ENCODE measurements at regions of chr3 and their contacts with region 1.

Region 1: DNA sequence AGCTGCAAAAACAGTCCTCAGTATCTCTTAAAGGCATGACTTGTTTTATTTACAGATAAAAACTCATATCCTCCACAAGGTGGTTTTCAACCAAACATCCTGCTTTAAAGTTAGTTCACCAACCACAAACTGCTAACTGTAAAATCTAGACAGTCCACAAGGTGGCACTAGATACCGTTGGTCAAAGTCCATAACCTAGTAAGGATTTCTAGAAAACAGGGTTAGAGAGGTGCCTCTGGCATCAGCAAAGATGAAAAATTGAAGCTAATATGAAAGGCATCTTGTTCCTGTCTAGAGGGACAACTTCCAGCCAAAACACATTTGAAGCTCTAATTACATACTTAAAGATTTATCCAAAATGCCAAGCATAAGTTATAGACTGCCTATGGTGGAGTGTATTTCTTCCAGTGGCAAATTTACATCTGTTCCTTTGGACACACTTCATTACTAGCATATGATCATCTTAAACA is 56.0 kb downstream of the ZMAT3 start:
- DNase-seq: peak; percentile 26 to 87 (median 59)
- ATAC-seq: peak; percentile 98
- H3K4me3 ChIP-seq: no peak overlapping the region
- H3K4me3 Mint-ChIP-seq: no peak overlapping the region
- H3K27ac ChIP-seq: no peak overlapping the region
- H3K27ac Mint-ChIP-seq: no peak overlapping the region
- H3K4me1 ChIP-seq: peaks cover 3% of the 10 kb centered on the region
- H3K4me1 Mint-ChIP-seq: peaks cover 18% of the 10 kb centered on the region
- H3K27me3 ChIP-seq: no peaks in the 10 kb centered on the region
- H3K27me3 Mint-ChIP-seq: no peaks in the 10 kb centered on the region
- CTCF ChIP-seq: peak; percentile 84

Region 2: DNA sequence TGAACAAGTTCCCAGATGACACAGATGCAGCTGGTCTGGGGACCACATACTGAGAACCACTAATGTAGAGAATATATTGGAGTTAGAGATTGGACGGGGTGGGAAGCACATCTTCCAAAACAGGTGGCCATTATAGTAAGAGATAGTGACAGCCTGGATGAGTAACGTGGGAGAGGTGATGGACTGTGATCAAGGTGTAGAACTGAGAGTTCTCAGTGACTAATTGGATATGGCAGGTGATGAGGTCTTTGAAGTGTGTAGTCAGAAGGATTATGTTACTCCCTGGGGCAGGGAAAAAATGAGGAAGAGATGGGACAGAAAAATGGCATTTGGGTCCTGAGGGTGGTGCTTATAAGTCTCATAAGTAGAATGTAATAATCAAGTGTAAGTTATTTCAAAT is 412.7 kb before region 1 on chr3:
- CTCF ChIA-PET with region 1: no interaction called
- POLR2A ChIA-PET with region 1: no interaction called
- intact Hi-C with region 1: no loop called
- DNase-seq: no peak
- ATAC-seq: no peak
- H3K4me3 ChIP-seq: no peak overlapping the region
- H3K4me3 Mint-ChIP-seq: no peak overlapping the region
- H3K27ac ChIP-seq: no peak overlapping the region
- H3K27ac Mint-ChIP-seq: no peak overlapping the region
- H3K4me1 ChIP-seq: no peaks in the 10 kb centered on the region
- H3K4me1 Mint-ChIP-seq: no peaks in the 10 kb centered on the region
- H3K27me3 ChIP-seq: no peaks in the 10 kb centered on the region
- H3K27me3 Mint-ChIP-seq: peaks cover 9% of the 10 kb centered on the region
- CTCF ChIP-seq: no peak

Region 3: GRCh38 chr3:179027326-179027900 is 11.8 kb after region 1 on chr3:
- CTCF ChIA-PET with region 1: interaction called, 34 read pairs
- POLR2A ChIA-PET with region 1: no interaction called
- intact Hi-C with region 1: loop called in 1 of 2 experiments (anchors 1 kb)
- DNase-seq: peak in 2 of 9 experiments; percentile 10 to 34
- ATAC-seq: peak; percentile 36
- H3K4me3 ChIP-seq: no peak overlapping the region
- H3K4me3 Mint-ChIP-seq: peak overlapping the region; percentile 62
- H3K27ac ChIP-seq: no peak overlapping the region
- H3K27ac Mint-ChIP-seq: peak overlapping the region; percentile 91
- H3K4me1 ChIP-seq: peaks cover 25% of the 10 kb centered on the region
- H3K4me1 Mint-ChIP-seq: peaks cover 31% of the 10 kb centered on the region
- H3K27me3 ChIP-seq: no peaks in the 10 kb centered on the region
- H3K27me3 Mint-ChIP-seq: no peaks in the 10 kb centered on the region
- CTCF ChIP-seq: no peak

Region 4: DNA sequence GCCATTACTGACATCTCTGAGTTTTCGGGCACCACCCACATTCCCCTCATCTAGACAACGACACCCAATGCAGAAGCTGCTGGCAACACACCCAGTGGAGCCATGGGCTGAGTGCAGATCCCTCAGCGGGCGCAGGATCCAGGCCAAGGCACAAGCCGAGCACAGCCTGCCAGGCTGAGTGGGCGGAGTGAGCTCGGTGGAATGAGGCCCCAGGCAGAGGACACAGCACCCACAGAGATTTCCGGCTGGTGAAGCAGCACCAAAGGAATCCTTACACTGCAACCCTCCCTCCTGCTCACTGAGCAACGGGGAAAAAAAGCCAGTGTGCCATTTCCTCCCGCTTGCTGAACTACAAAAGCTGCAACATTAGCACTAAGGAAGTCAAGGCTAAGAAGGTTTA is 21.8 kb after region 1 on chr3:
- CTCF ChIA-PET with region 1: interaction called, 10 read pairs
- POLR2A ChIA-PET with region 1: interaction called, 3 read pairs
- intact Hi-C with region 1: no loop called
- DNase-seq: peak in 8 of 9 experiments; percentile 18 to 66 (median 45)
- ATAC-seq: peak; percentile 87
- H3K4me3 ChIP-seq: peak overlapping the region in 1 of 2 experiments; percentile 1
- H3K4me3 Mint-ChIP-seq: peak overlapping the region; percentile 54
- H3K27ac ChIP-seq: peak overlapping the region in 1 of 2 experiments; percentile 21
- H3K27ac Mint-ChIP-seq: no peak overlapping the region
- H3K4me1 ChIP-seq: peaks cover 17% of the 10 kb centered on the region
- H3K4me1 Mint-ChIP-seq: peaks cover 14% of the 10 kb centered on the region
- H3K27me3 ChIP-seq: no peaks in the 10 kb centered on the region
- H3K27me3 Mint-ChIP-seq: no peaks in the 10 kb centered on the region
- CTCF ChIP-seq: no peak

Region 5: DNA sequence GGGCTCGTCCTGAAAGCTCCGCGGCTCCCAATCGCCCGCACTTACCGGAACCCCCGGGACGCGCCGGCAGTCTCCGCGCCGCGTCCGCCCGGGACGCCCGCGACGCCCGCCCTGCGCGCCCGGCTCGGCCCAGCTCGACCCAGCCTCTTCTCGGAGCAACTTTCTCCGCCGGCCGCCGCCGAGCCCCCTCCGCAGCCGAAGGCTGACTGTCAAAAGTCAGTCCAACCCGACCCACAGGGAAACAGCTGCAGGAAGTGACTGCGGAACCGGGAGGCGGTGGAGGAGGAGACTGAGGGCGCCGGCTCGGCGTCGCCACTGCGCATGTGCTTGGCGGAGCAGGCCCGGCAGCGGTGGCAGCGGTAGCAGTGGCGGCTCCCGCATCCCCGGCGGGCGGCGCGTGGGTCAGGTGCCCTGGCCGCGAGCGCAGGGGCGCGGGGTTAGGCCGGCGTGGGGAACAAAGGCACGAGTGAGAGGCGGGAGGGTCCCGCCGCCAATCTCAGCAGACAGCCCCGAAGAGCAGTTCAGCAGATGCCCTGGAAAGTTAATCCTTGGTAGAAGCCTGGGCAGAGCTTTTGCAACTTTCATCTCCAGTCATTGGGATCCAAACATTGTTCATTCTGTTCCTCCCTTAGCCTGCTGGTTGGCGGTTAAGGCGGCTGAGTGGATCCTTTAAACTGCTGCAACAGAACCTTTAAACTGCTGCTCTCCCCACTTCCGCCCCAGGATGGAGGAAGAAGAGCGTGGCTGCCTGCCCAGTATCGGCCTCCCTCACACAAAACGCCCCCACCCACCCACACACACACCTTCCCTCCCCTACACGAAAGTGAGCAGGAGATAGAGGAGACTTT is 56.2 kb after region 1 on chr3 and contains the start of gene ZMAT3:
- CTCF ChIA-PET with region 1: interaction called, 33 read pairs
- POLR2A ChIA-PET with region 1: interaction called, 5 read pairs
- intact Hi-C with region 1: loop called (anchors 2 to 5 kb)
- DNase-seq: peak; percentile 65 to 92 (median 85)
- ATAC-seq: peak; percentile 81
- H3K4me3 ChIP-seq: peak within 1 kb of the TSS; percentile 76 to 88
- H3K4me3 Mint-ChIP-seq: peak within 1 kb of the TSS; percentile 98
- H3K27ac ChIP-seq: peak within 1 kb of the TSS; percentile 80 to 83
- H3K27ac Mint-ChIP-seq: peak within 1 kb of the TSS; percentile 93
- H3K4me1 ChIP-seq: peaks cover 17% of the 10 kb centered on the region
- H3K4me1 Mint-ChIP-seq: peaks cover 61% of the 10 kb centered on the region
- H3K27me3 ChIP-seq: no peaks in the 10 kb centered on the region
- H3K27me3 Mint-ChIP-seq: no peaks in the 10 kb centered on the region
- CTCF ChIP-seq: no peak
- total RNA-seq, gene ZMAT3: 8.7 to 9.4 TPM

Region 6: DNA sequence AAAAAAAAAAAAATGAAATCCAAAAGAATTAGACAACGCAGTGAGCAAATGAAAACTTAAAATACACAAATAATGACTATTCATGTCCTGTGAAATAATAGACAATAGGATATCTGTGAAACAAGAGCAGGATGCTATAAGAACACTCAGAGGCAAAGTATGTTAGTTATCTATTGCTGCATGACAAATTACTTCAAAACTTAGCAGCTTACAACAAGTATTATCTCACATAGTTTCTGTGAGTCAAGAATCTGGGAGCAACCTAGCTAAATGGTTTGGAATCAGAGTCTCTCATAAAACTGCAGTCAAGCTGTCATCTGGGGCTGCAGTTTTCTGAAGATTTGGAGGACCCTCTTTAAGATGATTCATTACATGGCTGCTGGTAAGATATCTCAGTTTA is 92.5 kb after region 1 on chr3:
- CTCF ChIA-PET with region 1: interaction called, 3 read pairs
- POLR2A ChIA-PET with region 1: no interaction called
- intact Hi-C with region 1: loop called (anchors 2 kb)
- DNase-seq: no peak
- ATAC-seq: no peak
- H3K4me3 ChIP-seq: no peak overlapping the region
- H3K4me3 Mint-ChIP-seq: no peak overlapping the region
- H3K27ac ChIP-seq: no peak overlapping the region
- H3K27ac Mint-ChIP-seq: no peak overlapping the region
- H3K4me1 ChIP-seq: no peaks in the 10 kb centered on the region
- H3K4me1 Mint-ChIP-seq: peaks cover 1% of the 10 kb centered on the region
- H3K27me3 ChIP-seq: no peaks in the 10 kb centered on the region
- H3K27me3 Mint-ChIP-seq: peaks cover 4% of the 10 kb centered on the region
- CTCF ChIP-seq: no peak

Region 7: DNA sequence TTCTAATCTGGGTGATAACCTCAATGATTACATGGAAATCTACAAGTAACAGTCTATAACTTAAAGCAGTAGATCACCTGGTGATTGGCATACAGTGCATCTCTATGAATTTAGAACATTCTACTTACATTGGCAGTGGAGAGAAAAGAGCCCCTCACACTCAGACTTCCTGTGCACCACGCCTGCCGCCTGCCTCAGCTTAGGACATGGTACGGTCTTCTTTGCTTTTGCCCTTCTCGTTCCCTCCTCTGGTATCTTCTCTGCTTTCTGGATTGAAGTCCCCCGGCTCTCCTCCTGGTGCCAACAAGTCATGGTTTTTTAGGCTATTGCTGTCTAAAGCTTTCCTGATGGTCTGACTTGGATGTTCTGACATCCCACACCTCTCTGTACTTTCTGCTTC is 243.2 kb after region 1 on chr3:
- CTCF ChIA-PET with region 1: no interaction called
- POLR2A ChIA-PET with region 1: no interaction called
- intact Hi-C with region 1: no loop called
- DNase-seq: no peak
- ATAC-seq: no peak
- H3K4me3 ChIP-seq: no peak overlapping the region
- H3K4me3 Mint-ChIP-seq: no peak overlapping the region
- H3K27ac ChIP-seq: no peak overlapping the region
- H3K27ac Mint-ChIP-seq: peak overlapping the region; percentile 16
- H3K4me1 ChIP-seq: peaks cover 6% of the 10 kb centered on the region
- H3K4me1 Mint-ChIP-seq: peaks cover 24% of the 10 kb centered on the region
- H3K27me3 ChIP-seq: no peaks in the 10 kb centered on the region
- H3K27me3 Mint-ChIP-seq: no peaks in the 10 kb centered on the region
- CTCF ChIP-seq: no peak

Region 8: GRCh38 chr3:179272385-179272784 is 256.8 kb after region 1 on chr3:
- CTCF ChIA-PET with region 1: interaction called, 4 read pairs
- POLR2A ChIA-PET with region 1: no interaction called
- intact Hi-C with region 1: loop called in 1 of 2 experiments (anchors 2 kb)
- DNase-seq: peak in 3 of 9 experiments; percentile 12 to 29 (median 15)
- ATAC-seq: no peak
- H3K4me3 ChIP-seq: no peak overlapping the region
- H3K4me3 Mint-ChIP-seq: no peak overlapping the region
- H3K27ac ChIP-seq: no peak overlapping the region
- H3K27ac Mint-ChIP-seq: no peak overlapping the region
- H3K4me1 ChIP-seq: no peaks in the 10 kb centered on the region
- H3K4me1 Mint-ChIP-seq: no peaks in the 10 kb centered on the region
- H3K27me3 ChIP-seq: no peaks in the 10 kb centered on the region
- H3K27me3 Mint-ChIP-seq: peaks cover 11% of the 10 kb centered on the region
- CTCF ChIP-seq: no peak

Region 9: GRCh38 chr3:179309225-179310078 is 293.9 kb after region 1 on chr3:
- CTCF ChIA-PET with region 1: interaction called, 22 read pairs
- POLR2A ChIA-PET with region 1: no interaction called
- intact Hi-C with region 1: no loop called
- DNase-seq: no peak
- ATAC-seq: no peak
- H3K4me3 ChIP-seq: no peak overlapping the region
- H3K4me3 Mint-ChIP-seq: no peak overlapping the region
- H3K27ac ChIP-seq: no peak overlapping the region
- H3K27ac Mint-ChIP-seq: no peak overlapping the region
- H3K4me1 ChIP-seq: no peaks in the 10 kb centered on the region
- H3K4me1 Mint-ChIP-seq: no peaks in the 10 kb centered on the region
- H3K27me3 ChIP-seq: no peaks in the 10 kb centered on the region
- H3K27me3 Mint-ChIP-seq: peaks cover 3% of the 10 kb centered on the region
- CTCF ChIP-seq: no peak